ENCODE measurements at regions of chr7 and their contacts with region 1.

Region 1: GRCh38 chr7:98106647-98107445 is at the start of gene LMTK2:
- DNase-seq: peak; percentile 92 to 99 (median 96)
- ATAC-seq: peak; percentile 100
- H3K4me3 ChIP-seq: peak within 1 kb of the TSS; percentile 73 to 81
- H3K4me3 Mint-ChIP-seq: peak within 1 kb of the TSS; percentile 98
- H3K27ac ChIP-seq: peak within 1 kb of the TSS; percentile 65 to 77
- H3K27ac Mint-ChIP-seq: peak within 1 kb of the TSS; percentile 93
- H3K4me1 ChIP-seq: peaks cover 11% of the 10 kb centered on the region
- H3K4me1 Mint-ChIP-seq: peaks cover 47% of the 10 kb centered on the region
- H3K27me3 ChIP-seq: no peaks in the 10 kb centered on the region
- H3K27me3 Mint-ChIP-seq: peaks cover 10% of the 10 kb centered on the region
- CTCF ChIP-seq: peak; percentile 79
- total RNA-seq, gene LMTK2: 33.5 to 33.8 TPM

Region 2: DNA sequence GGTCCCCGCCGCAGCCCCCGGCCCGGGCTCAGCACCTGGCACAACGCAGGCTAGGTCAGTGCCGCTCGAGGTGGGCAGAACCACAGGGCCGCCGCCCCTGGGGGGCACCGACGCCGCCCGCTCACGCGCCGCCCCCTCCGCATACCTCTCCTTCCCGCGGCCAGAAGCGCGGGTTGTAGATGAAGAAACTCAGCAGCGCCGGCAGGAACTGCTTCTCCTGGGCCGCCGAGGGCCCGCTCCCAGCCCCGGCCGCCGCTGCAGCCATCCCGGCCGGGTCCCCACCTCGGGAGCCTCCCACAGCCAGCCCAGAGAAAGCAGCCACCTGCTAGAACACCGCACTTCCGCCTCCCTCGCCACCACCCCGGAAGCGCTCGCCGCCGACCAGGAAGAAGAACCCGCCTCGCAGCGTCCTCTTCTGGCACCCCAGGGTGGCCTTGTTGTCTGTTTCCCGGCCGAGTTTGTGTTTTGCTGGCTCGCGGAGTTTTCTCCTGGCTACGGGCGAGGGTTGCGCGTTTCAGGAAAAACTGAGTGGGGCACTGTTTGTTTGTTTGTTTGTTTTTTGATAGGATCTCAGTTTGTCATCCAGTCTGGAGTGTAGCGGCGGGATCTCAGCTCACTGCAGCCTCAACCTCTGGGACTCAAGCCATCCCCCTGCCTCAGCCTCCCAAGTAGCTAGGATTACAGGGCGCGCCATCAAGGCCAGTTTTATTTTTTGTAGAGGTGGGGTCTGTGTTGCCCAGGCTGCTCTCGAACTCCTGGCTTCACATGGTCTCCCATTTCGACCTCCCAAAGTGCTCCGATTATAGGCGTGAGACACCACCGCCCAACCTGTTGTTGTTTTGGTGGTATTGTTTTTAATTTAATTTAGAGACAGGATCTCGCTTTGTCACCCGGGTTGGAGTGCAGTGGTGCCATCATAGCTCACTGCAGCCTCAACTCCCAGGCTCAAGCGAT is 134.6 kb before region 1 on chr7:
- CTCF ChIA-PET with region 1: no interaction called
- POLR2A ChIA-PET with region 1: no interaction called
- intact Hi-C with region 1: loop called (anchors 1 to 2 kb)
- DNase-seq: peak; percentile 65 to 90 (median 84)
- ATAC-seq: peak; percentile 94
- H3K4me3 ChIP-seq: peak overlapping the region; percentile 81 to 84
- H3K4me3 Mint-ChIP-seq: peak overlapping the region; percentile 89
- H3K27ac ChIP-seq: peak overlapping the region; percentile 61 to 72
- H3K27ac Mint-ChIP-seq: peak overlapping the region; percentile 93
- H3K4me1 ChIP-seq: peaks cover 10% of the 10 kb centered on the region
- H3K4me1 Mint-ChIP-seq: peaks cover 22% of the 10 kb centered on the region
- H3K27me3 ChIP-seq: no peaks in the 10 kb centered on the region
- H3K27me3 Mint-ChIP-seq: no peaks in the 10 kb centered on the region
- CTCF ChIP-seq: peak; percentile 32

Region 3: DNA sequence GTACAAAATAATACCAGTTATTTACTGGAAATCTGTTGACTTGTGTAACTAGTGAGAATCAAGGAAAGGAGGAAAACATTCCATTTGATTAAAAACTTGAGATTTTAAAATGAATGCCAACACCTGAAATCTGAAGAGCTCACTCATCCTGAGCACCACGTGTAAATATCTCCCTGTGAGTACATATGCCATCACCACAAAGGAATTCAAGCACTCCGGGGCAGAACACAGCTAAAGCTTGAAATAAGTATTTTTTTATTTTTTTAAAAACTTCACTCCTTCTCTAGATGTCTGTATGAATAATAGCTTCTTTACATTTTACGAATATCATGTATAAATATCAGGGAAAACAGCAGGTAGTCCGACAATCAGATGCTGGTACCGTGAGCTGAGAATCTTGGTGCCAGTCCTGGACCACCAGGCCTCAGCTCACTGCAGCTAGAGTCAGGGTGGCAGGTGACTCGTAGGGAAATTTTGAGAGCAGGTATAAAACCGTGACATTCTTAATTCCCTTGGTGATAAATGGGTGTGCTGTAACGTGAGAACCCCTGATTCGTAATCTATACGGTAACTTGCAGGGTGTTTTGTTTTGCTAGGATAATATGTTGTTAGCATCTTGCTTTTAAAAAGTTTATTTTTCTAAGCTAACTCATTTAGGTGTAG is 12.5 kb after region 1 on chr7:
- CTCF ChIA-PET with region 1: interaction called, 11 read pairs
- POLR2A ChIA-PET with region 1: no interaction called
- intact Hi-C with region 1: no loop called
- DNase-seq: no peak
- ATAC-seq: no peak
- H3K4me3 ChIP-seq: no peak overlapping the region
- H3K4me3 Mint-ChIP-seq: no peak overlapping the region
- H3K27ac ChIP-seq: no peak overlapping the region
- H3K27ac Mint-ChIP-seq: no peak overlapping the region
- H3K4me1 ChIP-seq: no peaks in the 10 kb centered on the region
- H3K4me1 Mint-ChIP-seq: peaks cover 42% of the 10 kb centered on the region
- H3K27me3 ChIP-seq: no peaks in the 10 kb centered on the region
- H3K27me3 Mint-ChIP-seq: no peaks in the 10 kb centered on the region
- CTCF ChIP-seq: no peak

Region 4: DNA sequence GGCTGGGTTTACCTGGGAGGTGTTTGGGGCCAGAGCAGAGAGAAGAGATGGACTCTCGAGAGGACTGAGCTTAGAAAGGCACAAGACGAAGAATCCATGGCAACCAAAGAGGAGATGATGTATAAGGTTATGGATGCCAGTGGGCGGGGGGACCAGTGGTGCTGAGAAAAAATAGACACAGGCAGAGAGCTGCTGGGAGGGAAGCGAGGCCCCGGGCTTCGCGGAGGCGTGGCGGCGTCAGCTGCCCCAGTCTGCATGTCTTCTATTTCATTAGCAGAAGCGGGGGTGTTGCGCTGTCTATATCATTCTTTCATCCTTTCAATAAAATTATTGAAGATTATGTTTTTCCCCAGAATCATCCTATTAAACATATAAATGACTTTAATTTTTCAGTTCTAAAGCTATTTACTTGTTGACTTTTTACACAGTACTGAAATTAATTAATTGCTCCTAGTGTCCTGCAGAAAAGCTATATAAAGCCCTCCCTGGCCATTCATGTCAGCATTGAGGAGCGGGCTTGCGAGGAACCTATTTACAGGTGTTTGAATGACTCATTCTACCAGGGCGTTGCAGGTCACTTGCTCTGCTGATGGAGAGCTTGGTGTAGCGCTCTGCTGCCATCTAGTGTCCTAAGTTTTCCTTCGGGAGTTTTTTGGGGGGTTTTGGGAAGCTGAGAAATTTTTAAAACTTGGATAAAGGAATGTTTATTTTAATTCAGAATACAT is 61.5 kb after region 1 on chr7:
- CTCF ChIA-PET with region 1: interaction called, 73 read pairs
- POLR2A ChIA-PET with region 1: no interaction called
- intact Hi-C with region 1: loop called (anchors 1 kb)
- DNase-seq: peak; percentile 14 to 85 (median 66)
- ATAC-seq: peak; percentile 65
- H3K4me3 ChIP-seq: no peak overlapping the region
- H3K4me3 Mint-ChIP-seq: no peak overlapping the region
- H3K27ac ChIP-seq: no peak overlapping the region
- H3K27ac Mint-ChIP-seq: no peak overlapping the region
- H3K4me1 ChIP-seq: no peaks in the 10 kb centered on the region
- H3K4me1 Mint-ChIP-seq: peaks cover 20% of the 10 kb centered on the region
- H3K27me3 ChIP-seq: no peaks in the 10 kb centered on the region
- H3K27me3 Mint-ChIP-seq: no peaks in the 10 kb centered on the region
- CTCF ChIP-seq: peak; percentile 61

Region 5: DNA sequence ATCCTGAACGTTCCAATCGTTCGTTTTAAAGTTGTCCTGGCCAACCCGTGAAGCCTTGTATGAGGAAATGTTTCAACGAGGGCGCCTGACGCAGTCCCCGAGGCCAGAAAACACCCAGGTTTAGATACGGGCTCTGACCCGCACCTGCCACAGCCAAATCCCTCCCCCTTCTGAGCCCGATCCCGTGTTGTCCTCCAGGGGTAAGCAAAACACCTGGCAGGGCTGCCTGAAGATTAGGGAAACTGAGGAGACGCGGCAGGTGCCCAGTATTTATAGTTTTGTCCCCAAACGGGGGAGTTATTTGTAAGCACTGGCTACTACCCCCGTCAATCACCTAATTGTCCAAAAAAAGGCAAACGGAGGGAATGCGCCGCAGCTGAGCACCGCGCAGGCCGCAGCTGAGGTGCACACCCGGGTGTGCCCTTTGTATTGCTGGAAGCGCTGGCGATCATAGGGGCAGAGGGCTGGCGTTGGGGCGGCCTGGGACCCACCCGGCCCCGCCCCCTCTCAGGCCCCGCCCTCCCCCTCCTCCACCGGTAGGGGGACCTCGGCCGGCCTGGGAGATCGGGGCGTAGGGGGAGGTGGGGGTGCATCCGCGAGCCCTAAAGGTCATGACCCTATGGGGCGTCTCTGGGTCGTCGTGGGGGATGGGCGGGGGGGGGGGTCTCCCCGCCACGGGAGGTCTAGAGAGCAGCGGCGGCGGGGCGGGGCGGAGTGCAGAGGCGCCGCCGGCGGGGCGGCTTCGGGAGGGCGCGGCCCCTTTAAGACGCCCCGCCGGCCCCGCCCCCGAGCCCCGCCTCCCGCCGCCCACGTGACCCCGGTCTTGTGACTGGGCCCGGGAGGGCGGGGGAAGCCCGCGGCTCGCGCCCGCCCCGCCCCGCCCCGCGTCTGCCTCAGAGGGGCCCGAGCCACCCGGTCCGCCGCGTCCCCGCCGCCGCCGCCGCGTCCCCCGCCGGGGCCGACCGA is 174.2 kb after region 1 on chr7 and contains the start of gene BRI3:
- CTCF ChIA-PET with region 1: no interaction called
- POLR2A ChIA-PET with region 1: no interaction called
- intact Hi-C with region 1: loop called (anchors 1 to 2 kb)
- DNase-seq: peak; percentile 86 to 95 (median 92)
- ATAC-seq: peak; percentile 81
- H3K4me3 ChIP-seq: peak within 1 kb of the TSS; percentile 72 to 88
- H3K4me3 Mint-ChIP-seq: peak within 1 kb of the TSS; percentile 91
- H3K27ac ChIP-seq: peak within 1 kb of the TSS; percentile 62 to 67
- H3K27ac Mint-ChIP-seq: peak within 1 kb of the TSS; percentile 90
- H3K4me1 ChIP-seq: peaks cover 42% of the 10 kb centered on the region
- H3K4me1 Mint-ChIP-seq: peaks cover 33% of the 10 kb centered on the region
- H3K27me3 ChIP-seq: no peaks in the 10 kb centered on the region
- H3K27me3 Mint-ChIP-seq: no peaks in the 10 kb centered on the region
- CTCF ChIP-seq: no peak
- total RNA-seq, gene BRI3: 70.6 to 70.8 TPM

Region 6: DNA sequence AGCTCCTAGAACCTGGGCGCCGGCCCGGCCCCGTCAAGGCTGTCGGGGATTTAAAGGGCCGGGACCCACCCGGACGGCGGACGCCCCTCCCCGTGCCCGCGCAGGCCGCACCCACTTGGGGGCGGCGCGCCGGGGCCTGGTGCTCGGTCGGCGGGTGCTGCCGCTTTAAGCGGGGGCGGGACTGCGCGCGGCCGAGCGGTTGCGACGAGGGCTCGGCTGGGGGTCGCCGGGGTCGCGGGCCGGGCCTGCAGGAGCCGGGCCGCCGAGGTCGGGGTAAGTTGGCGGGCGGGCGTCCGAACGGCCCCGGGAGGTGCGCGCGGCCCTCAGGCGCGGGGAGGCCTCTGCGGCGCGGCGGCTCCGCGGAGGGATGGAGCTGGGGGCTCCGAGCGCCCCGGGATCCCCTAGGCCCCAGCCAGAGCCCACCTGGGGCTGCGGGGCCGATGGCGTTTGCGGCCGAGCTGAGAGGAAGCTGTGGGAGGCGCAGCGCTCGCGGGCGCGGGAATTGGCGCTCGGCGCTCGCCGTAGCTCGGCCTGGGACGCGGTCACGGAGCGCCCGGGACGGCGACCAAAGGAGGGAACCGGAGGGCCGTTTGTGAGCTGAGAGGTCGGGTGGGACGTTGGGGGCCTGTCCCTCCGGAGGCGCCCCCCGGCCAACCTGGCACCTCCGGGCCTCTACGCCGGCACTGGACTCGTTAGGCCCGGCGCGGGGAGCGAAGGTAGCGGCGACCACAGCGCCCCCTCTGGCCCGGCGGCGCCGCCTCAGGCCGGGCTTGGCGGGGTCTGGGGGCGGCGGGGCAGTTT is 771.7 kb after region 1 on chr7 and contains the start of gene TRRAP:
- CTCF ChIA-PET with region 1: no interaction called
- POLR2A ChIA-PET with region 1: no interaction called
- intact Hi-C with region 1: loop called (anchors 2 kb)
- DNase-seq: peak; percentile 56 to 87 (median 73)
- ATAC-seq: peak; percentile 63
- H3K4me3 ChIP-seq: peak within 1 kb of the TSS; percentile 82 to 92
- H3K4me3 Mint-ChIP-seq: peak within 1 kb of the TSS; percentile 98
- H3K27ac ChIP-seq: peak within 1 kb of the TSS; percentile 77 to 82
- H3K27ac Mint-ChIP-seq: peak within 1 kb of the TSS; percentile 96
- H3K4me1 ChIP-seq: peaks cover 16% of the 10 kb centered on the region
- H3K4me1 Mint-ChIP-seq: peaks cover 24% of the 10 kb centered on the region
- H3K27me3 ChIP-seq: no peaks in the 10 kb centered on the region
- H3K27me3 Mint-ChIP-seq: peaks cover 2% of the 10 kb centered on the region
- CTCF ChIP-seq: peak; percentile 94
- total RNA-seq, gene TRRAP: 39.8 to 43.0 TPM